Ovary (tissue), 10 donors: ENCODE measurements at regions of chr17 and their contacts with region 1.

Region 1: GRCh38 chr17:72069586-72070202 is 51.1 kb upstream of the SOX9 start:
- DNase-seq: no peak
- H3K4me3 ChIP-seq: no peak overlapping the region
- H3K27ac ChIP-seq: no peak overlapping the region
- H3K4me1 ChIP-seq: no peaks in the 10 kb centered on the region
- H3K27me3 ChIP-seq: no peaks in the 10 kb centered on the region
- CTCF ChIP-seq: no peak
- EP300 ChIP-seq: no peak
- POLR2A ChIP-seq: no peak

Region 2: DNA sequence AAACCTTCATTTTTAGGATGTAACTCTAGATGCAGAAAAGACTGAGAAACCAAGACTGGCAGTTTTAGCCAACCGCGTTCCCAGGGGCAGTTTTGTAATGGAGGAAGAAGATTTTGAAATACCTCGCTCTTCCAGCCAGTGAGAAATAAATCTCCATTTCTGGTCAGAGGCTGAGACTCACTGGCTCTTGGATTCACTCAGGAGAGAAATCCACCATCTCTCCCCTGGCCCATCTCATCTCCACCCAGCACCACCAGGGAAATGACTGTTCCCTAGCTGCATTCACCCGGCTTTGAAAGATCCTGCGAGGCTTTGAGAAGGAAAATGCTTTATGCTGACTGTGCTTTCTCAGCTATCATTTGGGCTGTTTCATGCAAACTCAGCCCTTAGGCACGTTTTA is 236.3 kb after region 1 on chr17:
- intact Hi-C with region 1: loop called in 1 of 4 experiments (anchors 5 kb)
- DNase-seq: no peak
- H3K4me3 ChIP-seq: no peak overlapping the region
- H3K27ac ChIP-seq: no peak overlapping the region
- H3K4me1 ChIP-seq: no peaks in the 10 kb centered on the region
- H3K27me3 ChIP-seq: no peaks in the 10 kb centered on the region
- CTCF ChIP-seq: no peak
- EP300 ChIP-seq: no peak
- POLR2A ChIP-seq: no peak